CD8-positive, alpha-beta memory T cell (primary cell): ENCODE measurements at regions of chr18 and their contacts with region 1.

Region 1: DNA sequence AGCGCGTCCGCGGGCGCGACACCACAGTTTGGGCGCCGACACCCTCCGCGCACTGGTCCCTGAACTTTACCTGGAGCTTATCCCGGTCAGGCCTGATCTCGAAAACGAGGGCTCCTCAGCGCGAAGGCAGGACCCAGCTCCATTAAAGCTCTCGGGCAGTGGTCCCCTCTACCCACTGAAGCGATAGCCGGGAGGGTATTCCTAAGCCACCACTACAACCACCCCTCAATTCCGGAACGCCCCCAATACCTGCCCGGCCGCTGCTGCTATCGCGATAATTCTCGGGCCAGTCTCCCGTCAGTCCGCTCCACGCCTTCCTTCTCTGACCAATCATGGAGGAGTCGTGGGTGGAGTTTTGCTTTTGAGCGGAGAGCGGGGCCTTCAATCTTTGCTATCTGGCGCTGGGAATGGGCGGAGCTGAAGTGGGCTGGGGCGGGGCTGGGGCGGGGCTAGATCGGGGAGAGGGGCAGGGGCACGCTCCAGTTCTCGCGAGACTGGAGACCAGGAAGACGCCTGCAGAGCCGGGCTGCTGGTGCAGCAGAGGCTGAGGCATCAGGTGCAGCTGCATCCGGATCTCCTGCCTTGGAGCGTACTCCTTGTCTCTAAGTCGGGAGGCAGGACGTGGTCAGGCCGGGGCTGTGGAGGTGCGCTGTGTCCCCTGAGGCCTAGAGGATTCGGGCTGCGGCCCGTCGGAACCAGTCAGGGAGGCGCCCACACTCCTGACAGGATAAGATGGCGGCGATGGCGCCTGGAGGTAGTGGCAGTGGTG is at the starts of genes PIGN and RELCH:
- DNase-seq: peak; percentile 92 to 98 (median 96)
- H3K4me3 ChIP-seq: peak within 1 kb of the TSS; percentile 98
- H3K4me3 Mint-ChIP-seq: peak within 1 kb of the TSS; percentile 98 to 100 (median 100)
- H3K27ac ChIP-seq: peak within 1 kb of the TSS; percentile 79
- H3K27ac Mint-ChIP-seq: peak within 1 kb of the TSS; percentile 82 to 99 (median 97)
- H3K4me1 ChIP-seq: peaks cover 56% of the 10 kb centered on the region
- H3K4me1 Mint-ChIP-seq: peaks cover 60 to 70% (median 69%) of the 10 kb centered on the region in 3 donors
- H3K27me3 ChIP-seq: no peaks in the 10 kb centered on the region
- H3K27me3 Mint-ChIP-seq: no peaks in the 10 kb centered on the region
- total RNA-seq, gene PIGN: 23.2 to 24.2 TPM
- total RNA-seq, gene RELCH: 19.6 TPM

Region 2: DNA sequence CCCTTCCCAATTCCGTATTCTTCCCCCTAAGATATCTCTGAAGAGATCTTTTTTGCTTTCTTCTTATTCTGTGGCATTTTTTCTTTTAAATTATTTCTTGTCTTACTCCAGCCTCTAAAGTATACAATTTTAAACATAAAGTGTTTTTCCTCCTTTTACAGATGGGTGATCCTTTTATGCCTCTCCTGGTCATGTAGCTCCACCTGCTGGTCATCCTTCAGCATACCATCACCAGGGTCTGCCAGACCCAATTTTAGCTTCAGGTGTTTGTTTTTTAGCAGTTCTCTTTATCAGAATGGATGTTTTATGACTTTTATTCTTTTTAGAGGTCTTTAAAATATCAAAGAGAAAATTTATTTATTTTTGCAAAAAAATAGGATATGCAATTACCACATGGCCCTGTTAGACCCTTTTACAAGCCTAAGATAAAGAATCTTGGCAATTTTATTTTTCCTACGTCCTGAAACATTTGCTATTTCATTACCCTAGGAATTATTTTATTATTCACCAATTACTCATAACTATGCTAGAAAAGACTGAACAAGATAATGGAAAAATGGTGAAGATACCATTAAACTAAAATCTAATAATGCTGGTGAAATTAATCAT is 55.6 kb before region 1 on chr18:
- CTCF ChIA-PET with region 1: no interaction called
- POLR2A ChIA-PET with region 1: no interaction called
- DNase-seq: peak; percentile 10 to 55 (median 41)
- H3K4me3 ChIP-seq: no peak overlapping the region
- H3K4me3 Mint-ChIP-seq: no peak overlapping the region
- H3K27ac ChIP-seq: no peak overlapping the region
- H3K27ac Mint-ChIP-seq: no peak overlapping the region
- H3K4me1 ChIP-seq: no peaks in the 10 kb centered on the region
- H3K4me1 Mint-ChIP-seq: peaks cover 0 to 4% (median 0%) of the 10 kb centered on the region in 3 donors
- H3K27me3 ChIP-seq: no peaks in the 10 kb centered on the region
- H3K27me3 Mint-ChIP-seq: no peaks in the 10 kb centered on the region

Region 3: DNA sequence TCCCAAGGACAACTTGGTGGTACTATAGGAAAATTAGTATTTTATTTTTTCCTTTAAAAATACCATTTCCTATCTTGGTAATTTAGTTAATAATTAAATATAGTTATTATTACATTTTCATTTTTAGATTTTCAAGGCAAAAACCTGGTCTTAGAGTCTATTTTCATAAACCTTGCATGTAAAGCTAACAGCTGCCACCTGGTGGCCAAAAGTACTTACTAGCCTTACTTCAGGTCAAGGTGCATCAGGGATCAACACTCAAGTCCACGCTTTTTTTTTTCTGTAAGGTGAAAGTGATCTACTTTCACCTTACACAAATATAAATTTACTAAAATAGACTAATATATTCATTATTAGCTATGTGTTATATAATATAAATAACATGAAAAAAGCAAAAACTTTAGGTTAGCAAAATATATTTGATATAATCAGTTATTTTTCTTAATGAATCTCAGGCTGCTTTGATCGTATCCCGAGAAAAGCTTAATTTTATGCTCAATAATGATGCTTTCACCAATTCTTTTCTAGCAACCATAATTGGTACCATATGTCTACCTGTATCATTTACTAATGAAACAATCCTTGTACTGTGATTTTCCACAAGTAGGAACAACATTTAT is 62.6 kb after region 1 on chr18:
- CTCF ChIA-PET with region 1: interaction called, 34 read pairs
- POLR2A ChIA-PET with region 1: interaction called, 8 read pairs
- DNase-seq: peak; percentile 47 to 77 (median 55)
- H3K4me3 ChIP-seq: no peak overlapping the region
- H3K4me3 Mint-ChIP-seq: no peak overlapping the region
- H3K27ac ChIP-seq: no peak overlapping the region
- H3K27ac Mint-ChIP-seq: no peak overlapping the region
- H3K4me1 ChIP-seq: no peaks in the 10 kb centered on the region
- H3K4me1 Mint-ChIP-seq: no peaks in the 10 kb centered on the region
- H3K27me3 ChIP-seq: no peaks in the 10 kb centered on the region
- H3K27me3 Mint-ChIP-seq: no peaks in the 10 kb centered on the region